B cell (primary cell): ENCODE measurements at regions of chr22 and their contacts with region 1.

Region 1: DNA sequence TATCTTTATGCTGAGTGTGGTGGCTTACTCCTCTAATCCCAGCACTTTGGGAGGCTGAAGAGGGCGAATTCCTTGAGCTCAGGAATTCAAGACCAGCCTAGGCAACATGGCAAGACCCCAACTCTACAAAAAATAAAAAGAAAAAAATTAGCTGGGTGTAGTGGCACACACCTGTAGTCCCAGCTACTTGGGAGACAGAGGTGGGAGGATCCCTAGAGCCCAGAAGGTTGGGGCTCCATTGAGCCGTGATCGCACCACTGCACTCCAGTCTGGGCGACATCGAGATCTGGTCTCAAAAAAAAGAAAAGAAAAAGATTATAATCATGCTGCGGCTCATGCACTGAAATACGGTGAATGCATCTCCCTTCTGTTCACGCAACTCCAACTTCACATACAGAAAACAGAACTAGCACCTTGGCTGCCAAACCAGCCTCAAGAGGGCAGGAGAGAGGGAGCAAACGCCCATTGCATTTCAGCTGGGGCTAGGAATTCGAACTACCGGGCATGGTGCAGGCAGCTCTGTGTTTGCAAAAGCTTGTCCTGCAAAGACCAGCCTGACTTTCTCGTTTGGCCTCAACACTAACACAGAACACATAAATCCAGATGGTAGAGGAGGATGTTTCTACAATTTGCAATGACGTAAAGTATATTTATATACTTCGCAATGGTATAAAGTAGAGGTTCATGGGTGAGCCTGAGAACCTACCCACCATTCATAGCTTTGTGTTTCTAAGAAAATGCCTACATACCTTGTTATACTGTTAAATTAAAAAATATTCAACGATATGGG is 6.3 kb upstream of the SYNGR1 start:
- DNase-seq: peak; percentile 76
- ATAC-seq: peak; percentile 90
- H3K4me3 ChIP-seq: no peak overlapping the region
- H3K4me3 Mint-ChIP-seq: no peak overlapping the region
- H3K27ac ChIP-seq: no peak overlapping the region
- H3K27ac Mint-ChIP-seq: no peak overlapping the region
- H3K4me1 ChIP-seq: peaks cover 6 to 8% of the 10 kb centered on the region in 2 donors
- H3K4me1 Mint-ChIP-seq: peaks cover 4% of the 10 kb centered on the region
- H3K27me3 ChIP-seq: peaks cover 0 to 10% (median 0%) of the 10 kb centered on the region in 4 experiments
- H3K27me3 Mint-ChIP-seq: peaks cover 10% of the 10 kb centered on the region
- CTCF ChIP-seq: peak; percentile 85

Region 2: GRCh38 chr22:39332441-39333064 is 10.9 kb before region 1 on chr22:
- CTCF ChIA-PET with region 1: interaction called, 29 read pairs
- POLR2A ChIA-PET with region 1: no interaction called
- intact Hi-C with region 1: no loop called
- DNase-seq: no peak
- ATAC-seq: no peak
- H3K4me3 ChIP-seq: no peak overlapping the region
- H3K4me3 Mint-ChIP-seq: no peak overlapping the region
- H3K27ac ChIP-seq: no peak overlapping the region
- H3K27ac Mint-ChIP-seq: no peak overlapping the region
- H3K4me1 ChIP-seq: no peaks in the 10 kb centered on the region
- H3K4me1 Mint-ChIP-seq: no peaks in the 10 kb centered on the region
- H3K27me3 ChIP-seq: no peaks in the 10 kb centered on the region
- H3K27me3 Mint-ChIP-seq: no peaks in the 10 kb centered on the region
- CTCF ChIP-seq: no peak

Region 3: GRCh38 chr22:39356464-39356863 is 13.0 kb after region 1 on chr22:
- CTCF ChIA-PET with region 1: interaction called, 18 read pairs
- POLR2A ChIA-PET with region 1: interaction called, 3 read pairs
- intact Hi-C with region 1: no loop called
- DNase-seq: no peak
- ATAC-seq: no peak
- H3K4me3 ChIP-seq: no peak overlapping the region
- H3K4me3 Mint-ChIP-seq: no peak overlapping the region
- H3K27ac ChIP-seq: no peak overlapping the region
- H3K27ac Mint-ChIP-seq: no peak overlapping the region
- H3K4me1 ChIP-seq: peaks cover 9 to 12% of the 10 kb centered on the region in 2 donors
- H3K4me1 Mint-ChIP-seq: peaks cover 21% of the 10 kb centered on the region
- H3K27me3 ChIP-seq: no peaks in the 10 kb centered on the region
- H3K27me3 Mint-ChIP-seq: no peaks in the 10 kb centered on the region
- CTCF ChIP-seq: no peak

Region 4: GRCh38 chr22:39428578-39429071 is 85.2 kb after region 1 on chr22:
- CTCF ChIA-PET with region 1: no interaction called
- POLR2A ChIA-PET with region 1: no interaction called
- intact Hi-C with region 1: no loop called
- DNase-seq: no peak
- ATAC-seq: no peak
- H3K4me3 ChIP-seq: no peak overlapping the region
- H3K4me3 Mint-ChIP-seq: no peak overlapping the region
- H3K27ac ChIP-seq: no peak overlapping the region
- H3K27ac Mint-ChIP-seq: no peak overlapping the region
- H3K4me1 ChIP-seq: no peaks in the 10 kb centered on the region
- H3K4me1 Mint-ChIP-seq: no peaks in the 10 kb centered on the region
- H3K27me3 ChIP-seq: no peaks in the 10 kb centered on the region
- H3K27me3 Mint-ChIP-seq: no peaks in the 10 kb centered on the region
- CTCF ChIP-seq: no peak